H1 (cell line): ENCODE measurements at regions of chr15 and their contacts with region 1.

Region 1: DNA sequence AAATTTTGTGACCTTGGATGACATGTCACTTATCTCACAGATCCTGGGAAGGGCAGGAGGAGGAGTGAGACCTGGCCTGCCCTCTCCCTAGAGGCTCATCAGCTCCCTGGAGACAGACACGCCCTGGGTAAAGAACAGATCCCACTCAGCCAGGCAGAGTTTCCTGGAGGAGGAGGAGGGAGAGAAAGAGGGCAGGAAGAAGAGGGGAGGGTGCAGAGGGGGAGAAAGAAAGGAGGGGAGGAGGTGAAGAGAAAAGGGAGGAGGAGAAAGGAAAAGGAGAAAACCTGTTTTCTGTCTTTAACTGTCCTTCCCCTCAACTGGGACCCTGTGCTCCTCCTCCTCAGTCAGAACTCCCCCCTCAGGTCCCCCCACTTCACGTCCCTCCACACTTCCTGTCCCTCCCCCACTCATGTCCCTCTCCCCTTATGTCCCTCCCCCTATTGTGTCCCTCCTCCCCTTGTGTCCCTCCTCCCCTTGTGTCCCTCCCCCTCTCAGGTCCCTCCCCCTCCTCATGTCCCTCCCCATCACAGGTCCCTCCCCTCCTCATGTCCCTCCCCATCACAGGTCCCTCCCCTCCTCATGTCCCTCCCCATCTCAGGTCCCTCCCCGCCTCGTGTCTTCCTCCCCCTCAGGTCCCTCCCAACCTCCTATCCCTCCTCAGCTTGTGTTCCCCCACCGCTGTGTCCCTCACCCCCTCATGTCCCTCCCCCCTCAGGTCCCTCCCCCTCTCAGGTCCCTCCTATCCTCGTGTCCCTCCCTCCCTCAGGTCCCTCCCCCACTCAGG is 52.3 kb upstream of the CGNL1 start:
- DNase-seq: no peak
- H3K4me3 ChIP-seq: no peak overlapping the region
- H3K27ac ChIP-seq: no peak overlapping the region
- H3K4me1 ChIP-seq: peaks cover 2 to 13% (median 5%) of the 10 kb centered on the region in 4 experiments; a peak in 6 of 7 replicates
- H3K27me3 ChIP-seq: no peaks in the 10 kb centered on the region; a peak in 1 of 7 replicates
- CTCF ChIP-seq: no peak
- EP300 ChIP-seq: no peak
- POLR2A ChIP-seq: no peak
- RAD21 ChIP-seq: no peak

Region 2: GRCh38 chr15:57306161-57306943 is 17.6 kb before region 1 on chr15:
- CTCF ChIA-PET with region 1: interaction called, 15 read pairs
- POLR2A ChIA-PET with region 1: interaction called, 9 read pairs
- DNase-seq: peak; percentile 75 to 100
- H3K4me3 ChIP-seq: peak overlapping the region; percentile 33 to 69 (median 60)
- H3K27ac ChIP-seq: peak overlapping the region; percentile 49; the same call in 1 of the 2 replicates
- H3K4me1 ChIP-seq: peaks cover 5 to 14% (median 10%) of the 10 kb centered on the region in 4 experiments
- H3K27me3 ChIP-seq: no peaks in the 10 kb centered on the region
- CTCF ChIP-seq: peak; percentile 75 to 86 (median 82)
- EP300 ChIP-seq: no peak
- POLR2A ChIP-seq: peak in 1 of 2 experiments; percentile 65; a peak in 2 of 3 replicates
- RAD21 ChIP-seq: peak; percentile 84 to 90

Region 3: DNA sequence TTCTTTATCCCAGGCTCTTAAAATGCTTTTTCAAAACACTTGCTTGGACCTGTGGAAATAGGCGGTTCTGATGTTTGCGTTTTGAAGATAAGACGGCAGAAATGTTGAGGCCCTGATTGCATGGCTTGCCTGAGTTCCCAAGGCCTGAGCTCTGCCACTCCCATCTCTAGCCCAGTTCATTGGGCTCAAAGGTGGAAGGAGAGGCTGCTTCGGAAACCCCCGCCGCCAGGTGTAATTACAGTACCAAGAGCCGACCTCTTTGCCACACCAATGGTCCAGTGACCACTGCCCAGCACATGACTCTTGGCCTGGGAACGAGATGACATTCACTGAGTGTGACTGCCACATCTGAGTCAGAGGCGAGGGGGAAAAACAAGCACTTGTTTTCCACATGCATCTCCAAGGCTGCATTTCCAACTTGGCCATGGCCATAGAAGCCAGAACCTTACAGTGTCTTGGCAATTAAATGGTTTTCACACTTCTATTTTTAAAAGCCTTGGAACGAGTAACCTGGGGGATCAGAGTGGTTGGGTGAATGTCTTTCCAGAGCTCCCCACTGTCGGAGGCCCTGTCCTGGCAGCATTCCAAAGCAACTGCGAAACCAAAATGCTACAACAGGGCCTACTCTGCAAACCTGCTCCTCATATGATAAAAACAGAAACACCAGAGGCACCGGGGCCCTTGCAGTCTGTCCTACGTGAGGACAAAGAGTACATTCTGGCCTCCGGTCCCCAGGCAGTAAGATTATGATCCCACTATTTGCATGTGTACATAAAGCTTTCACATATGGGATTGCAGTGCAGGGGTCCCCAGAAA is 11.5 kb before region 1 on chr15:
- CTCF ChIA-PET with region 1: interaction called, 15 read pairs
- POLR2A ChIA-PET with region 1: interaction called, 9 read pairs
- DNase-seq: no peak
- H3K4me3 ChIP-seq: no peak overlapping the region
- H3K27ac ChIP-seq: no peak overlapping the region
- H3K4me1 ChIP-seq: no peaks in the 10 kb centered on the region
- H3K27me3 ChIP-seq: no peaks in the 10 kb centered on the region
- CTCF ChIP-seq: no peak
- EP300 ChIP-seq: no peak
- POLR2A ChIP-seq: no peak
- RAD21 ChIP-seq: no peak

Region 4: DNA sequence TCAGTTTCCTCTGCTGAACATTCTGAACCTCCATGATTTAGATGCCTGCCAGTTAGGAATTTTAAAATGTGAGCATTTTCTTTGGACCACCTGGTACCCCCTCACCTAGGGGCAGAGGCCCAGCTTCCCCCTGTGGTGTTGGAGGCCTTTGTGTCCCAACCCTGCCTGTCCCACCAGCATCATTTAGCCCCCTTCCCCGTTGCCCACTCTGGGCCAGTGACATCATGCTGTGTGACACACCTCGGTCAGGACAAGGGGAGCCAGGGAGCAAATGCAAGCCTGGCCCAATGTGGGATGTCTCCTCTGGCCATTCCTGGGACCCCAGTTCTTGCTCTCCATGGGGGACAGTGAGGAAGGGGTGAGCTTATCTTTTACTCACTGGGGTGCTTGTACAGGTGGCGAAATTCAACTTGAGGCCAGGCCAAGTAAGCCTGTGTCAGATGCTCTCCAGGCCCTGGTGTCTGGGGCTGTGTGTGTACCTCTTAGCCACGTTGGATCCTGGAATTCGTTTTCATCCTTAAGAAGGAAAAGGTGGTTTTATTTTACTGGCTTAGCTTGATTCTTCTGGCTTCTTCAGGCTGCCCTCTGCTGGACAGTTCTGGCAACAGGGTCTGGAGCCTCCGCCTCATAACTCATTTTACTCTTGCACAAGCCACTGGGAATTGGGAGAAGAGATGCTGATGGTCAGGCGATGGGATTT is 218.0 kb after region 1 on chr15:
- CTCF ChIA-PET with region 1: interaction called, 14 read pairs
- POLR2A ChIA-PET with region 1: no interaction called
- DNase-seq: peak in 1 of 2 experiments; percentile 83
- H3K4me3 ChIP-seq: no peak overlapping the region
- H3K27ac ChIP-seq: no peak overlapping the region
- H3K4me1 ChIP-seq: 0 out of 7 replicates have a peak, but pooled peaks cover 0 to 1% (median 0%) of the 10 kb centered on the region in 4 experiments
- H3K27me3 ChIP-seq: no peaks in the 10 kb centered on the region
- CTCF ChIP-seq: peak; percentile 63 to 85 (median 70)
- EP300 ChIP-seq: no peak
- POLR2A ChIP-seq: no peak
- RAD21 ChIP-seq: peak; percentile 56 to 65